Activated CD4-positive, alpha-beta memory T cell treated with anti-CD3 and anti-CD28 coated beads for 36 hours (primary cell): ENCODE measurements at regions of chr9 and their contacts with region 1.

Region 1: DNA sequence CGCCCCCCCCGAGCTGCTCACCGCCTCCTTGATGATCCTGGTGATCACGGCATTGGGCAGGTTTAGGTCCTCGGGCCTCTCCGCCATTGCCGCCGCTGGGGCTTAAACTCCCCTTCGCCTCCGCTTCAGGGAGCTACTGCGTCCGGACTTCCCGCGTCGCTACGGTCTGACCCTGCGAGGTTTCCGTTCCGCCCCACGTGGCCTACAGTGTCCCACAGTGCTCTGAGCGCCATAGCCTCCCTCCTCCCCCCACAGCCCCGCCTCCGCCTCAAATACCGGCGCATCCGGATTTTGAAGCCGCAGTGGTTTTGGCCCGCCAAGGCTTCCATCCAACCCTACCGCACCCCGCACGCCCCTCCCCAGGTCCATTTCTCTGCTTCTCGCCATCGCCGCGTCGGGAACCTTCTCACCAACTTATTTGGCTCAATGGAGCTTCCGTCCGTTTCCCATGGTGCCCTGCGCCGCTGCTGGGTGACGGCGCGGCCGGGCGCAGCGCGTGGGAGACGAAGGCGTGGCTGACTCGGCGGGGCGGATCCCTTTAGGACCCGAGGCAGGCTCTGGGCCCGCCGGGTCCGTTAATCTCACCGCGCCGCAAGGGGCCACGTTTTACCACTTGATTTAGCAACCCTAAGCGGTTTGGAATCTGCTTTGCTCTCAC is at the starts of genes C9orf43 and POLE3:
- DNase-seq: peak; percentile 97
- H3K4me3 Mint-ChIP-seq: peak within 1 kb of the TSS; percentile 98
- H3K27ac Mint-ChIP-seq: peak within 1 kb of the TSS; percentile 100
- H3K4me1 Mint-ChIP-seq: peaks cover 36% of the 10 kb centered on the region
- H3K27me3 Mint-ChIP-seq: no peaks in the 10 kb centered on the region
- total RNA-seq, gene C9orf43: 0.65 to 0.81 TPM
- total RNA-seq, gene POLE3: 44.3 to 45.0 TPM

Region 2: DNA sequence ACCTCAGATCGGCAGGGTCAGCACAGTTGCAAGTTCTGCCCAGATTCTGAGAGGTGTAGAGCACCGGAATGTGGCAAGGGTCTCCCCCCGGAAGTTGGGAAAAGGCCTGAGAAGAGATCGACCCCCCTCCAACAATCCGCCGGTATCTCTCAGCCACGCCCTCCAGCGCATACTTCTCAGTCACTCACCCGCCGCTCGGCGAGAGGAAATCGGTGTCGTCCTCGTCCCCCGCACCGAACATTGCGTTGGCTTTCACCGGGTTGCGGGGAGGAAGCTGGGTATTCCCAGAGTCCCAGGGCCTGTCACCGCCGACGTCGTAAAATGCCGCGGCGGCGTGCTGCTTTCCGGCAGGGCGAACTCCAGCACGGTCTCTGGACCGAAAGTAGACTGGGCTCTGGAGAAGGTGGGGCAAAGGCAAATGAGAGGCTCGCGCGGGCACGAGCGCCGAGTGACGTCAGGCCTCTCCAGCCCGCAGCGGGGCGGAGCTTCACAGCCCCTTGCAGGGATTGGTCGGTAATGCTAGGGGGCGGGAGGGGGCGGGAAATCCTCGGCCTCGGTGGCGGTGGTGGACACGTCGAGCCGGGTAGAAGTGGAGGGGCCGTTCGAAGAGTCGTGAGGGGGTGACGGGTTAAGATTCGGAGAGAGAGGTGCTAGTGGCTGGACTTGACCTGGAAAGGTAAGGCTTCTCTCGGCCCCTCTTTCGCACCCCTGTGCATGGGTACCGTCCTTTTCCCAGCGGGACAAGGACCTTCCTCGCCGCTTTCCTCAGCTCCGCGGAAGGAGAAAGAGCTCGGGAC is 189.1 kb before region 1 on chr9 and contains the starts of genes FKBP15 and SLC31A1:
- CTCF ChIA-PET with region 1: interaction called, 3 read pairs
- POLR2A ChIA-PET with region 1: interaction called, 9 read pairs
- intact Hi-C with region 1: loop called (anchors 1 kb)
- DNase-seq: peak; percentile 98
- H3K4me3 Mint-ChIP-seq: peak within 1 kb of the TSS; percentile 94
- H3K27ac Mint-ChIP-seq: peak within 1 kb of the TSS; percentile 92
- H3K4me1 Mint-ChIP-seq: peaks cover 34% of the 10 kb centered on the region
- H3K27me3 Mint-ChIP-seq: no peaks in the 10 kb centered on the region
- total RNA-seq, gene FKBP15: 25.8 to 27.7 TPM
- total RNA-seq, gene SLC31A1: 12.1 to 12.5 TPM

Region 3: DNA sequence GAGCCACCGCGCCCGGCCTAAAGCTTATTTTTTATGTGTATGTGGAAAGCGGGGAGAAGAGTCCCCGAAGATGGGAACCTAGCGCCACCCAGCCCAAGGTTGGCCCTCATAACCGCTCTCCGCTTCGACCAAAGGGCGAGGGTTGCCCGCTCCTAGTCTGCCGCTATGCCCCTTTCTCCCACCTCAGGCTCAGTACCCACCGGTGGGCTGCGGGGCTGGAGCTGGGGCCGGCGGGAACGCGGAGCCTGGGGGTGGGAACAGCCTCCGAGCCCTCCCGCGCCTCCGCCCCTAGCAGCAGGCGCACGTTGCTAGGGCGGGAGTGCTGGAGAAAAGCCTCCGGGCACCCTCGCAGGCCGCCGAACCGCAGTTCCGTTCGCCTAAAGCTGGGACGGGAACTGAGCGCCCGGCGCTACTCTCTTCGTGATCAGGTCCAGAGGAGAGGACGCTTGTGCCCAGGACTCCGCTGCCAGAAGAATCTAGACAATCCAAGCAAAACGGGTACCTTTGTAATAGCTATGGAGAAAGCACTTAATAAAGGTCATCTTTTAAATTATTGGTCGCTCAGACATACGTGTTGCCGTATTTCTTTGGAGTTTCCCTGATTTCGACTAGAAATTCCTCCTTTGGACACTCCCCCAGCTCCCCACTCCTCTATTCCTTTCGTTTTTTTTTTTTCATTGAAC is 70.2 kb before region 1 on chr9 and contains the start of gene WDR31:
- CTCF ChIA-PET with region 1: no interaction called
- POLR2A ChIA-PET with region 1: interaction called, 12 read pairs
- intact Hi-C with region 1: loop called (anchors 2 kb)
- DNase-seq: peak; percentile 88
- H3K4me3 Mint-ChIP-seq: peak within 1 kb of the TSS; percentile 72
- H3K27ac Mint-ChIP-seq: no peak within 1 kb of the TSS
- H3K4me1 Mint-ChIP-seq: peaks cover 27% of the 10 kb centered on the region
- H3K27me3 Mint-ChIP-seq: no peaks in the 10 kb centered on the region
- total RNA-seq, gene WDR31: 1.6 to 2.4 TPM

Region 4: DNA sequence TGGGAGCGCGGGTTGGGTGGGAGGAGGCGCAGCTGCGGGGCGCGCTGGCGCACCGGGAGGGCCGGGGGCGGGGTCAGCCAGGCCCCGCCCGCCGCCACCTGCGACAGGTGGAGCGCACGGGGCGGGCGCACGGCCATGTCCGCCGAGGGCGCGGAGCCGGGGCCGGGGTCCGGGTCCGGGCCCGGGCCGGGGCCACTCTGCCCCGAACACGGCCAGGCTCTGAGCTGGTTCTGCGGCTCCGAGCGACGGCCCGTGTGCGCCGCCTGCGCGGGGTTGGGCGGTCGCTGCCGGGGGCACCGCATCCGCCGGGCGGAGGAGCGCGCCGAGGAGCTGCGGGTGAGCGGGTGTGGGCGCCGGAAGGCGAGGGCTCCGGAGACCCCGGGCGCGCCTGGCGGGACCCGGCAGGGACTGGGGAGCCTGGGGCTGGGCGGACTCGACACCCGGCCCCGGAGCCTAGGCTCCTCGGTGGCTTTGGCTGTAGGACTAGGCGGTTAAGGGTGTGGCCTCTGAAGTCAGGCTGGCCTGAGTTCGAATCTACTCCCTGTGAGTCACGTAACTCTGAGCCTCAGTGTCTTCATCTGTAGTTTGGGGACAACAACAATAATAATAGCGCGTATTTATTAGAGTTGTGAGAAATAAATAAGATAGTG is 60.8 kb before region 1 on chr9 and contains the start of gene BSPRY:
- CTCF ChIA-PET with region 1: interaction called, 5 read pairs
- POLR2A ChIA-PET with region 1: interaction called, 9 read pairs
- intact Hi-C with region 1: loop called (anchors 1 kb)
- DNase-seq: peak; percentile 41
- H3K4me3 Mint-ChIP-seq: peak within 1 kb of the TSS; percentile 77
- H3K27ac Mint-ChIP-seq: peak within 1 kb of the TSS; percentile 69
- H3K4me1 Mint-ChIP-seq: peaks cover 56% of the 10 kb centered on the region
- H3K27me3 Mint-ChIP-seq: peaks cover 32% of the 10 kb centered on the region
- total RNA-seq, gene BSPRY: 7.6 to 8.5 TPM

Region 5: GRCh38 chr9:113376634-113377567 is 33.4 kb before region 1 on chr9 and contains the start of gene HDHD3:
- CTCF ChIA-PET with region 1: interaction called, 3 read pairs
- POLR2A ChIA-PET with region 1: interaction called, 5 read pairs
- intact Hi-C with region 1: loop called (anchors 2 kb)
- DNase-seq: peak; percentile 89
- H3K4me3 Mint-ChIP-seq: peak within 1 kb of the TSS; percentile 80
- H3K27ac Mint-ChIP-seq: peak within 1 kb of the TSS; percentile 81
- H3K4me1 Mint-ChIP-seq: peaks cover 17% of the 10 kb centered on the region
- H3K27me3 Mint-ChIP-seq: no peaks in the 10 kb centered on the region
- total RNA-seq, gene HDHD3: 17.2 to 17.7 TPM

Region 6: GRCh38 chr9:113591001-113591898 is 180.9 kb after region 1 on chr9:
- CTCF ChIA-PET with region 1: interaction called, 7 read pairs
- POLR2A ChIA-PET with region 1: no interaction called
- intact Hi-C with region 1: loop called (anchors 2 kb)
- DNase-seq: peak; percentile 86
- H3K4me3 Mint-ChIP-seq: no peak overlapping the region
- H3K27ac Mint-ChIP-seq: no peak overlapping the region
- H3K4me1 Mint-ChIP-seq: peaks cover 41% of the 10 kb centered on the region
- H3K27me3 Mint-ChIP-seq: no peaks in the 10 kb centered on the region

Region 7: DNA sequence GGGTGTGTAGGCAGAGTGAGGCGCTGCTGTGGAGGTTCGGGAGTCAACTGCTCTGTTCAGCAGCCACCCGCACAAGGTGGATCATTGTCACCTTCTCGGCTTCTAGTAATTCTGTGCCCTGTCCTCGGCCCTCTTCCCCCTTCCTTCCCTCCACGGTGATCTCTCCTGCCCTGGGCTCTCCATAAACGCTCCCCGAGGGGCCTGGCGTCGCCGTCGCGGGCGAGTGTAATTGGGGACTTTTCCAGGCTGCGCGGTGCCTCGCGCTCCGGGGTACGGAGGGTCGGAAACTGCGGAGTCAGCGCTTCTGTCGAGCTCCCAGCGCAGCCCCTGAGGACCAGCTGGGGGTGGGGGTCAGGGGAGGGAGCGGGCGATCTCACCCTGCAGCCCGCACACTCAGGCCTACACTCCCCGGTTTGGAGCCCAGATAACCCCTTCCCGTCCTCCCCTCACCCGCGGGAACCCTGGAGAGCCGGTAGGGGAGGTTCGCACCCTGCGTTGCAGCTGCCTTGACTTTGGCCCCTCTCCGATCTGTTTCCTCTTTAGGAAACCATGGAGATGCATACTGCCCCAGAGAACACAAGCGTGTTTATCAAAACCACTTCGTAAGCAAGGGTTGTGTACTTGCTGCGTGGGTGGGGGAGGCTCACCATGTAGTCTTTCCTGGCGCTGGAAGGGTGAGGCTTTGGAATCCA is 277.5 kb after region 1 on chr9:
- CTCF ChIA-PET with region 1: no interaction called
- POLR2A ChIA-PET with region 1: no interaction called
- intact Hi-C with region 1: no loop called
- DNase-seq: peak; percentile 13
- H3K4me3 Mint-ChIP-seq: no peak overlapping the region
- H3K27ac Mint-ChIP-seq: no peak overlapping the region
- H3K4me1 Mint-ChIP-seq: peaks cover 5% of the 10 kb centered on the region
- H3K27me3 Mint-ChIP-seq: peaks cover 65% of the 10 kb centered on the region